ENCODE measurements at regions of chr10 and their contacts with region 1.

Region 1: GRCh38 chr10:132387764-132388210 is 9.2 kb upstream of the PWWP2B start:
- DNase-seq: peak; percentile 66 to 85
- H3K4me3 ChIP-seq: no peak overlapping the region
- H3K4me3 Mint-ChIP-seq: no peak overlapping the region
- H3K27ac Mint-ChIP-seq: no peak overlapping the region
- H3K4me1 ChIP-seq: peaks cover 11% of the 10 kb centered on the region
- H3K4me1 Mint-ChIP-seq: no peaks in the 10 kb centered on the region
- H3K27me3 ChIP-seq: no peaks in the 10 kb centered on the region
- H3K27me3 Mint-ChIP-seq: no peaks in the 10 kb centered on the region
- CTCF ChIP-seq: peak; percentile 68 to 75

Region 2: GRCh38 chr10:132637477-132638129 is 249.8 kb after region 1 on chr10:
- CTCF ChIA-PET with region 1: no interaction called
- POLR2A ChIA-PET with region 1: no interaction called
- intact Hi-C with region 1: loop called (anchors 10 kb)
- DNase-seq: peak in 1 of 2 experiments; percentile 61
- H3K4me3 ChIP-seq: no peak overlapping the region
- H3K4me3 Mint-ChIP-seq: no peak overlapping the region
- H3K27ac Mint-ChIP-seq: no peak overlapping the region
- H3K4me1 ChIP-seq: no peaks in the 10 kb centered on the region
- H3K4me1 Mint-ChIP-seq: peaks cover 9% of the 10 kb centered on the region
- H3K27me3 ChIP-seq: no peaks in the 10 kb centered on the region
- H3K27me3 Mint-ChIP-seq: no peaks in the 10 kb centered on the region
- CTCF ChIP-seq: peak; percentile 57 to 69

Measured in Caco-2 (cell line).